T-cell (primary cell): ENCODE measurements at regions of chr9 and their contacts with region 1.

Region 1: DNA sequence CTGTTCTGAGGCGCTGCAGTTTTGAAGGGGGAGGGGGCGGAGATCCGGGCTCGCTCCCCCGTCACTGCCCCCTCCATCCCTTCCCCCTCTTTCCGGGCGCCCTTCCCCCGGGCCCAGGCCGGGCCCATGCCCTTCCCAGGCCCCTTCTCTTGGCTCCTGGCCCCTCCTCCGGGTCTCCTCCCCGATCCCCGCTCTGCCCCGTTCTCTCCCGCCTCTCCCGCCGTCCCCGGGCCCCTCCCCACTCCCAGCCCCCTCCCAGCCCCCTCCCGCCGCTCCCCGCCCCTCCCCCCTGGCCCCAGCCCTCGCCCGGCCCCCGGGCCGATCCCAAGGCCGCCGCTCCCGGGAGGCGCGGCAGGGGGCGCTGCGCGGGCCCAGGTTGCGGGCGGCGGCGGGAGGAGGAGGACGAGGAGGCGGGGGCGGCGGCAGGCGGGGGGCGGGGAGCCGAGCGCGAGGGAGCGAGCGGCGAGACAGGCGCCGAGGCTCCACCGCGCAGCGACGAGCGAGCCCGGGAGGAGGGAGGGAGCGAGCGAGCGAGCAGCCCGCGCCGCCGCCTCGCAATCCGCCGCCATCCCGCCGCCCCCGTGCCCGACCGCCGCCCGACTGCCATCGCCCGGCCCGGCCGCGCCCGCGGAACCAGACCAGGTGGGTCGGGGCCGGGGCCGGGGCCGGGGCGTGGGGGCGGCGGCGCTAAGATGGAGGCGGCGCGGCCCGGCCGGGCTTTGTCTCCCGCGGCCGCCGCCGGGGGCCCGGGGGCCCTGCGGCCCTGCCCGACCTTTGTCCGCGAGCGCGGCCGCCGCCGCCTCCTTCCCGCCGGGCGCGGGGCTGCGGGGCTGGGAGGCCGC is at the start of gene PRRC2B:
- DNase-seq: peak; percentile 70 to 94 (median 83)
- ATAC-seq: peak; percentile 60 to 69 (median 64)
- H3K4me3 ChIP-seq: peak within 1 kb of the TSS; percentile 60 to 76
- H3K4me3 Mint-ChIP-seq: peak within 1 kb of the TSS; percentile 85 to 95 (median 93)
- H3K27ac ChIP-seq: peak within 1 kb of the TSS; percentile 74
- H3K27ac Mint-ChIP-seq: peak within 1 kb of the TSS; percentile 92
- H3K4me1 ChIP-seq: peaks cover 40 to 50% of the 10 kb centered on the region in 2 experiments
- H3K4me1 Mint-ChIP-seq: peaks cover 42 to 49% (median 46%) of the 10 kb centered on the region in 3 donors
- H3K27me3 ChIP-seq: no peaks in the 10 kb centered on the region
- H3K27me3 Mint-ChIP-seq: no peaks in the 10 kb centered on the region
- total RNA-seq, gene PRRC2B: 259 to 375 (median 370) TPM

Region 2: DNA sequence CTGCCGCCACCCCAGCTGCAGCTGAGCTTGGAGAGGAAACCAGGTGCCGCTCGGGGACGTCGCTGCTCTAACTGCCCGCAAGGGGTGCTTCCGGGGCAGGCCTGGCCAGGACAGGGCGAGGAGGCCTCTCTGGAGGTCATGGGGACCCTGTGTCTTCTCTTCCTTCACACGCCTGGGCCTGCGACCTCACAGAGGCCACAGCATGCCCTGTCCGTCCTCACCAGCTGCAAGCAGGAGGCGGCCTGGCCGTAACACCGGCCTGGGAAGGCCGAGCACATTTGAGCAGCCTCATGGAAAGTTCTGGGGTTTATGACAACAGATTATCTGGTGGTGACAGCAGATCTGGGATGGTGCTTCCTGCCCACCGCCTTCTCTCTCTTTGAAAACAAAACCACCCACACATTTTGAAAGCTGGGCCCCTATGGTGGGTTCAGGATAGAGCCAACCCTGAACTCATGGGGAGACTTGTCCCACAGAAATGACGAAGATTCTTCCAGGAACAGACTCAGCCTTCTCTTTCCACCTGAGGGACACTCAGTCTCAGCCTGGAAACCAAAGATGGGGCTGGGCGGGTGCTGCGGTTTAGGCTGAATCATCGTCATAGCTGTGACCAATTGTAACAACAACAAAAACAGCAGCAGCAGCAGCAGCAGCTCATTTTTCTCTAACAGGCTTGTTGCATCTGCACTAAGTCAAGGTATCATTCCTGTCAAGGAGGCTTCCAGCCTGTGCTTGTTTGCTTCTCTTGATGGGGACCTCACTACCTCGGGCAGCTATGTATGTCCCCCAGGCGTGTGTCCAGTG is 445.6 kb after region 1 on chr9:
- CTCF ChIA-PET with region 1: interaction called in 1 of 2 experiments, 10 read pairs
- POLR2A ChIA-PET with region 1: no interaction called
- DNase-seq: peak in 31 of 35 experiments; percentile 6 to 58 (median 30)
- ATAC-seq: peak; percentile 60 to 82 (median 66)
- H3K4me3 ChIP-seq: no peak overlapping the region
- H3K4me3 Mint-ChIP-seq: peak overlapping the region in 2 of 3 donors; percentile 17 to 33
- H3K27ac ChIP-seq: peak overlapping the region; percentile 82
- H3K27ac Mint-ChIP-seq: peak overlapping the region; percentile 93 to 95
- H3K4me1 ChIP-seq: peaks cover 0 to 28% of the 10 kb centered on the region in 2 experiments
- H3K4me1 Mint-ChIP-seq: peaks cover 0 to 17% (median 14%) of the 10 kb centered on the region in 3 donors
- H3K27me3 ChIP-seq: peaks cover 0 to 47% of the 10 kb centered on the region in 2 experiments
- H3K27me3 Mint-ChIP-seq: peaks cover 7 to 35% of the 10 kb centered on the region in 2 donors